A673 (cell line): ENCODE measurements at regions of chr1 and their contacts with region 1.

Region 1: DNA sequence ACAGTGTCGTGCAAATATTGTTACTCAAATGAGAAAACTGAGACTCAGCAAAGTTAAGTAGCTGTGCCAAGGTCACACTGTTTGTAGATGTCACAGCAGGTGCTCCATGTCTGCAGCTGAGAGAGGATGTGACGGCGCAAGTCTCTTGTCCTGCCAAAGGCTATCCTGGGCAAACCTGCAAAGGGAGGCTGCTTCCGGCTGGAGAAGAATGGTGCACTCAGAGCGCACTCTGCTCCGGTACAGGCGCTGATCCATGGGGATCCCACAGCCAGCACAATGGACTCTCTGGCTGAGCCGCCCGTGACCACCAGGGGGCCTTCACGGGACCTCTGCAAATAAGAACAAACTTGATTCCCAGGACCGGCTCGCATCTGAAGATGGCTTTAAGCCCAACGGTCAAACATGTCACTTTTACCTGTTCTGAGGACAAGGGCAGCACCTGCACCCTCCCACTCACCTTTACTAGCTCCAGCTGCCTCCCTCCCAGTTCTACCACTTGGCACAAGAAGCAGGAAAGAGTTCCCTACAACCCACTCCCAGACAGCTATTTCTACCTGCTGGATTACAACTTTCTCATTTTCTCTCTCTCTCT is 21.9 kb downstream of the RD3 start:
- DNase-seq: peak; percentile 81
- H3K4me3 ChIP-seq: no peak overlapping the region
- H3K27ac ChIP-seq: no peak overlapping the region
- H3K4me1 ChIP-seq: no peaks in the 10 kb centered on the region
- H3K27me3 ChIP-seq: peaks cover 13% of the 10 kb centered on the region
- CTCF ChIP-seq: peak; percentile 96

Region 2: DNA sequence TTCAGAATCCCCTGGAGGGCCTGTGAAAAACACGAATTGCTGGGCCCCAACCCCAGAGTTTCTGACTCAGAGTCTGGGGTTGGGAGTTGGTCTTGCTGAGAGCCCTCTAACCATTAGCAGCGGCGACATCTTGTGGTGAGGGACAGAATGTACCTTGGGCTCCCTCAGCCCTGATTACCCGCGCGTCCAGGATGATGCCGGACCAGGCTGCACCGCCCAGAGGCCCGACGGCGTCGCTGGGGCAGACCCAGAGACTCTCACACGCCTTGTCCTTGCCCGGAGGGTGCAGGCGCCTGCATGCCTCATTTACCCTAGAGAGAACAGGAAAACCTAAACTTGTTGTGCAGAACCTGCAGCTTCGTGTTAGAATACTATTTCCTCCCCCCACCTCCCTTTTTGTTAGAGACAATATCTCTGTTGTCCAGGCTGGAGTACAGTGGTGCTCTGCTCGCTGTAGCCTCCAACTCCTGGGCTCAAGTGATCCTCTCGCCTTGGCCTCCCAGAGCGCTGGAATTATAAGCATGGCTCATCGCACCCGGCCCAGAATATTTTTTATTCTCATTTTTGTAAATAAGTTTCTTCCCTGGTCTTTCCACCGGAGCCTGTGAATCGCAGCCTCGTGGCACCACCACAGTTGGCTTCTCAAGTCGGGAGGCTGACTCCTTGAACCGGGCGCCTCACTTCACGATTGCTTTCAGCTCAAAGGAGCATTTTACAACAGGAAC is 44.2 kb after region 1 on chr1:
- CTCF ChIA-PET with region 1: no interaction called
- POLR2A ChIA-PET with region 1: no interaction called
- intact Hi-C with region 1: loop called (anchors 2 kb)
- DNase-seq: peak; percentile 86
- H3K4me3 ChIP-seq: no peak overlapping the region
- H3K27ac ChIP-seq: no peak overlapping the region
- H3K4me1 ChIP-seq: no peaks in the 10 kb centered on the region
- H3K27me3 ChIP-seq: no peaks in the 10 kb centered on the region
- CTCF ChIP-seq: peak; percentile 82

Region 3: GRCh38 chr1:211557894-211558625 is 88.0 kb after region 1 on chr1:
- CTCF ChIA-PET with region 1: no interaction called
- POLR2A ChIA-PET with region 1: no interaction called
- intact Hi-C with region 1: no loop called
- DNase-seq: no peak
- H3K4me3 ChIP-seq: no peak overlapping the region
- H3K27ac ChIP-seq: no peak overlapping the region
- H3K4me1 ChIP-seq: no peaks in the 10 kb centered on the region
- H3K27me3 ChIP-seq: no peaks in the 10 kb centered on the region
- CTCF ChIP-seq: no peak